Psoas muscle (tissue), 8 donors: ENCODE measurements at regions of chr1 and their contacts with region 1.

Region 1: GRCh38 chr1:169485544-169486278 is at the start of gene SLC19A2:
- DNase-seq: peak; percentile 100
- ATAC-seq: peak; percentile 79 to 91 (median 86)
- H3K4me3 ChIP-seq: peak within 1 kb of the TSS; percentile 95
- H3K27ac ChIP-seq: peak within 1 kb of the TSS; percentile 99
- H3K4me1 ChIP-seq: peaks cover 45% of the 10 kb centered on the region
- H3K27me3 ChIP-seq: no peaks in the 10 kb centered on the region
- CTCF ChIP-seq: peak; percentile 15
- total RNA-seq, gene SLC19A2: 23.6 to 151 (median 83.3) TPM

Region 2: GRCh38 chr1:168609133-168609715 is 876.5 kb before region 1 on chr1:
- intact Hi-C with region 1: loop called in 1 of 2 experiments (anchors 10 kb)
- DNase-seq: peak; percentile 76 to 88
- ATAC-seq: peak; percentile 81 to 82 (median 82)
- H3K4me3 ChIP-seq: peak overlapping the region; percentile 53
- H3K27ac ChIP-seq: peak overlapping the region; percentile 94
- H3K4me1 ChIP-seq: peaks cover 74% of the 10 kb centered on the region
- H3K27me3 ChIP-seq: no peaks in the 10 kb centered on the region
- CTCF ChIP-seq: no peak

Region 3: GRCh38 chr1:169115891-169116585 is 369.7 kb before region 1 on chr1:
- intact Hi-C with region 1: loop called (anchors 10 kb)
- DNase-seq: peak; percentile 44 to 77
- ATAC-seq: peak; percentile 14 to 39 (median 23)
- H3K4me3 ChIP-seq: peak overlapping the region; percentile 100
- H3K27ac ChIP-seq: peak overlapping the region; percentile 96
- H3K4me1 ChIP-seq: peaks cover 76% of the 10 kb centered on the region
- H3K27me3 ChIP-seq: no peaks in the 10 kb centered on the region
- CTCF ChIP-seq: no peak

Region 4: DNA sequence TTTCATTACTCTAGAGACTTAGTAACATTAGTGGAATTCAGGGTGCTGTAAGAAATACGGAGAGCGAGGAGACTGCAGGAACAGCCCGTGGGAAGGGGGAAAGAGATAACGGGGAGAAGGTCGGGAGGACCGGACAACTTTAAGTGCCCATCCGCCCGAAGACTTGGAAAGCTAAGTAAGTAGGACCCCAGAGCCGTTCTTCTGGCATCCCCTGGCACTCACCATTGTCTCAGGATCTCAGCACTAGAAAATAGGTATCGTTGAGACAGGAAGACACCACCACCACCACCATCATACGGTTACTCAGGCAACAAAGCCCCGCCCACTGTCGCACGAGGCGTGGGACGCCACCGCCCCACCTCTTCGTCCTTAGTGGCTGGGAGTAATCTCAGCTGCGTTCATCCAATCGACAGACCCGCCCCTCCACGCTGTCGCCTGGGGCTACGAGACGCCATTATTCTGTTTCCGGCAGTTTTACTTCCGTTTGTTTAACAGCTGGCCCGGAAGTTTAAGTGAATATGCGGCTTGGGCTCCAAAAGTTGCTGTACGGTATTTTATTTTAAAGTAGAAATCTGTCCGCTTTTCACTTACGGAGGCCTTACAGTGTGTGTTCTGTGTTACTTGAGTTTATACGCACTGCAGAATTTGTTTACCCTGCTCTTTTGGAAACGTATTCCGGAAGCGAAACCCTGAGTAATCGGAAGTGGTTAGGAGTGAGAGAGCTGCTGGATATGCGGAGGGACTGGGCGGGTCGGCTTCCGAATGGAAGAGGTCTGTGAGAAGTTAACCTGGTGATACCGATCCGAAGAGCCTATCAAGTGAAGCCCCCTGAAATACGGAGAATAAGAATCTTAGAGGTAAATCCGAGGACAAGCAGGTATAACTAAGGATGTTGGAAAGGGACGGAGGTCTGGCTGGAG is 118.0 kb before region 1 on chr1 and contains the starts of genes BLZF1 and NME7:
- intact Hi-C with region 1: loop called in 1 of 2 experiments (anchors 10 kb)
- DNase-seq: peak; percentile 96 to 97
- ATAC-seq: peak; percentile 99 to 100 (median 100)
- H3K4me3 ChIP-seq: peak within 1 kb of the TSS; percentile 88
- H3K27ac ChIP-seq: peak within 1 kb of the TSS; percentile 91
- H3K4me1 ChIP-seq: peaks cover 18% of the 10 kb centered on the region
- H3K27me3 ChIP-seq: no peaks in the 10 kb centered on the region
- CTCF ChIP-seq: no peak
- total RNA-seq, gene BLZF1: 12.7 to 14.9 (median 13.7) TPM
- total RNA-seq, gene NME7: 3.9 to 6.4 (median 4.4) TPM

Region 5: DNA sequence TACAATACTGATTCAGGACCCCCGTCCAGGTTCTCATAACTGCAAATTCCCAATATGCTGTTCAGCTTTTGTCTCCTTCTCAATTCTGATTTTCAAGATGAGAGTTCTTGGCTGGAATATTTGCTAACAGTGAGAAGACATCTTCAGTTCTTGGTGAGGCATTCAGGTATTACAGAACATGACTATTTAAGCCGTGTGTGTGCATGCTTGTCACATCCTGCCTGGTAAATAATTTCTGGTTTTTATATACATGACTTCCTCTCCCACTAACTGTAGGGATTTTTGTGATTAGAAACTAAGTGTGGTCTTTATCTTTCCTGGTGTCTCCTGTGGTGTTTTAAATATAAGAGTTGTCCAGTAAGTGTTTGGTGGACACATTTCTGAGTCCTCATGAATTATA is 10.2 kb after region 1 on chr1:
- intact Hi-C with region 1: no loop called
- DNase-seq: no peak
- ATAC-seq: no peak
- H3K4me3 ChIP-seq: no peak overlapping the region
- H3K27ac ChIP-seq: no peak overlapping the region
- H3K4me1 ChIP-seq: no peaks in the 10 kb centered on the region
- H3K27me3 ChIP-seq: no peaks in the 10 kb centered on the region
- CTCF ChIP-seq: no peak

Region 6: GRCh38 chr1:169538998-169539871 is 53.5 kb after region 1 on chr1:
- intact Hi-C with region 1: no loop called
- DNase-seq: no peak
- ATAC-seq: no peak
- H3K4me3 ChIP-seq: no peak overlapping the region
- H3K27ac ChIP-seq: no peak overlapping the region
- H3K4me1 ChIP-seq: no peaks in the 10 kb centered on the region
- H3K27me3 ChIP-seq: no peaks in the 10 kb centered on the region
- CTCF ChIP-seq: no peak

Region 7: DNA sequence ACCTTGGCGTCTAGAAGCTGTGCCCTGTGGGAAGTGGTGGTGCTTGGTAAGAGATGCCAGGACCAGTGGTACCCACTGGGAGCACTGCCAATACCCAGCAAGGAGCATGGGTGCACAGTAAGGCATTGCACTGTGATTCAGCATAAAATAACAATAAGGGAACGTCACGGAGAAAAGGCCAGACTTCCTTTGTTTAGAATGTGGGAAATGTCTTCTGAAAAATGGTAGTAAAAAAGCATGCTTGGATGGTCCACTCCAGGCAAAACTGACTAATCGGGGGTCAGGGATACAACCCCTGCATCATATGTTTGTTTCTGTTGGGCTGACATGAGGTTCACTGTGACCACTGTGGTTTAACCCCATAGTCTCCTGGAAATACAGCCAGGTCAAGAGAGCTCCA is 294.3 kb after region 1 on chr1:
- intact Hi-C with region 1: no loop called
- DNase-seq: no peak
- ATAC-seq: no peak
- H3K4me3 ChIP-seq: no peak overlapping the region
- H3K27ac ChIP-seq: no peak overlapping the region
- H3K4me1 ChIP-seq: no peaks in the 10 kb centered on the region
- H3K27me3 ChIP-seq: peaks cover 0 to 5% (median 3%) of the 10 kb centered on the region in 3 donors
- CTCF ChIP-seq: no peak